AG04449 (cell line): ENCODE measurements at regions of chr16 and their contacts with region 1.

Region 1: GRCh38 chr16:11372073-11372828 is 27.0 kb downstream of the RMI2 start:
- DNase-seq: no peak
- H3K4me3 ChIP-seq: no peak overlapping the region
- CTCF ChIP-seq: no peak

Region 2: DNA sequence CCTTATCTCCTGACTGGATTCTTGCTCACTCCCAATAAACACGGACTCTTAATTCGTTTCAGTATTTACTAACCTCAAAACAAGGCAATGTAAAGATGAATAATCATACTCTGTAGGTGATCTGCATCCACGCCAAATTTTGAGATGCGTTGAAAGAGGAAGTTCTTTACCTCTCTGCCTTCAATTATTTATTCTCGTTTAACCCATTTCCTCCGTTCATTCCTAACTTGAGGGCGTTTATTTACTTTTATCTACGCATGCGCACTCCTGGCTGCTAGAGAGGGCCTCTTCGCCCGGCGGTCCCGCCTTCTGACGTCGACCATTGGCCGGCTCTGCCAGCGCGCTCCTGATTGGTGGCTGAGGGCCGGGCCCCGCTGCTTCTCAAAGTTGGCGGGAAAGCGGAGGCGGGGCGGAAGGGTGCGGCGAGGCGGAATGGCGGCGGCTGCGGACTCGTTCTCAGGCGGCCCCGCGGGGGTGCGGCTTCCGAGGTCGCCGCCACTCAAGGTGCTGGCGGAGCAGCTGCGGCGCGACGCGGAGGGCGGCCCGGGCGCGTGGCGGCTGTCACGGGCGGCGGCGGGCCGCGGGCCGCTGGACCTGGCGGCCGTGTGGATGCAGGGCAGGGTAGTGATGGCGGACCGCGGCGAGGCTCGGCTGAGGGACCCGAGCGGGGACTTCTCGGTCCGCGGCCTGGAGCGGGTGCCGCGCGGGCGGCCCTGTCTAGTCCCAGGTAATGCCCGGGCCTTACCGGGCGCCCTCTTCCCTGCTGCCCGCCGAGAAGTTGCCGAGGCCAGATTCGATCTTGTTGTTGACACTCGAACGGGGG is 27.0 kb before region 1 on chr16 and contains the start of gene RMI2:
- CTCF ChIA-PET with region 1: interaction called, 11 read pairs
- POLR2A ChIA-PET with region 1: no interaction called
- DNase-seq: no peak
- H3K4me3 ChIP-seq: peak within 1 kb of the TSS; percentile 60
- CTCF ChIP-seq: no peak

Region 3: GRCh38 chr16:11356573-11357331 is 15.5 kb before region 1 on chr16:
- CTCF ChIA-PET with region 1: interaction called, 21 read pairs
- POLR2A ChIA-PET with region 1: no interaction called
- DNase-seq: no peak
- H3K4me3 ChIP-seq: no peak overlapping the region
- CTCF ChIP-seq: peak; percentile 81

Region 4: DNA sequence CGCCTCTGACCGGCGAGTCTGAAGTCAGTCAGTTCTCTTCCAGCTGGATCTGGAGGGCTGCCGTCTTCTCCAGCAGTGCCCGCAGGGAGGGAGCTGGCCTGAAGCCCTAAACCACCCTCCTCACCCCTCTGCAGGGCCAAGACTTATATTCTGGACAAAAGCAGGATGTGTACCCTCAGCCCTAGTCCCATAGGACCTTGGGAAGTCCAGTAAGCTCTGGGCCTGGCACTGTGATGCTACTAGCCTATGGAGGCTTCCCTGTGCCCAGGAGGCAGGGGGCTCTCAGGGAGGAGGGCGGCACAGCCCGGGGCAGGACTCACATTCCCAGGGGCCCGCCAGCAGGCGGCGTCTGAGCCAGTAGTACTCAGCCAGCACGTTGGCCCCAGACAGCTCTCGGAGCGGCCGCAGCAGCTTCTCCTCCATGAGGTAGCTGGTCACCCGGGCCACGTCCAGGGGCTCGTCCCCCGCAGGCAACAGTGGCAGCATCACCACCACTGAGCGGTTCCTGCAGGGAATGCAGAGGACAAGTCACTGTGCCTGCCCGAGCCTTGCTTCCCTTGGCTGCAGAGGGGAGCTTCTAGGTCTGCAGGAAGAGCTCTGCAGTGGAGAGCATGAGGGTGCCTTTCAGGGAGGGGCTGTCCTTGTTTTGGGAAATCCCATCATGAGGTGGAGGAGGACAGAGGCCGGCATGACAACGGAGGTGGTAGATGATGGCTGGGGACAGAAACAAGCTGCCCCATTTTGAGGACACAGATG is 14.7 kb after region 1 on chr16:
- CTCF ChIA-PET with region 1: interaction called, 11 read pairs
- POLR2A ChIA-PET with region 1: no interaction called
- DNase-seq: no peak
- H3K4me3 ChIP-seq: no peak overlapping the region
- CTCF ChIP-seq: peak; percentile 75